Dorsolateral prefrontal cortex (tissue), 120 donors: ENCODE measurements at regions of chr5 and their contacts with region 1.

Region 1: GRCh38 chr5:75511435-75512384 is at the starts of genes CERT1 and POLK:
- DNase-seq: peak; percentile 95 to 100 (median 98)
- H3K4me3 ChIP-seq: peak within 1 kb of the TSS; percentile 67 to 98 (median 88)
- H3K27ac ChIP-seq: peak within 1 kb of the TSS; percentile 82 to 99 (median 96)
- H3K27me3 ChIP-seq: no peaks in the 10 kb centered on the region
- CTCF ChIP-seq: peak in 18 of 56 donors; percentile 6 to 47 (median 24)
- total RNA-seq, gene CERT1: 37.0 to 86.0 (median 61.1) TPM
- total RNA-seq, gene POLK: 30.3 to 55.8 (median 41.3) TPM

Region 2: DNA sequence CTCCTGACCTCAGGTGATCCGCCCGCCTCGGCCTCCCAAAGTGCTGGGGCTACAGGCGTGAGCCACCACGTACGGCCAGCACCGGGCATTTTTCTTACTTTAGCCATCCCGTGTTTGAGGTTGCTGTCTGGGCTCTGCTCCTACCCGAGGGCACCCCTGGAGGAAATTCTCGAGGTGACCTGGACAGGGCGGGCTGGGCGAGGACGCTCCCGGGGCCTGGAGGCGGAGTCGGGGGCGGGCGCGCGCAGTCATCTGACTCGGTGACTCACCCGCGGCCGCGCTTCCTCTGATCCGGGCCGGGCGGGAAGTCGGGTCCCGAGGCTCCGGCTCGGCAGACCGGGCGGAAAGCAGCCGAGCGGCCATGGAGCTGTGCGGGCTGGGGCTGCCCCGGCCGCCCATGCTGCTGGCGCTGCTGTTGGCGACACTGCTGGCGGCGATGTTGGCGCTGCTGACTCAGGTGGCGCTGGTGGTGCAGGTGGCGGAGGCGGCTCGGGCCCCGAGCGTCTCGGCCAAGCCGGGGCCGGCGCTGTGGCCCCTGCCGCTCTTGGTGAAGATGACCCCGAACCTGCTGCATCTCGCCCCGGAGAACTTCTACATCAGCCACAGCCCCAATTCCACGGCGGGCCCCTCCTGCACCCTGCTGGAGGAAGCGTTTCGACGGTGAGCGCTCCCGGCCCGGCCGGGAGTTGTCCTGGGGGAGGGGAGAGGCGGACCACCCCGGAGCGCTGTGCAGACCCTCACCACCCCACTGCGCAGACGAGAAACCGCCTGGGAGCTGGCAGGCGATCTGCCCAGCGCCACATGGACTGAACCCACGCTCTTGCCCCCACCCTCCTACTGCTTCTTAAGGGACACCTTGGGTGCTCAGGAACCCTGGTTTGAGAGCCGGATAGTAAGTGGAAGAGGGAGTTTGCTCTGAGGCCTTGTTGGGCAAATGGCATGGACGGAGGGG is 826.5 kb before region 1 on chr5 and contains the start of gene HEXB:
- intact Hi-C with region 1: loop called in 1 of 2 experiments (anchors 10 kb)
- DNase-seq: peak; percentile 72 to 93 (median 84)
- H3K4me3 ChIP-seq: peak within 1 kb of the TSS; percentile 64 to 98 (median 88)
- H3K27ac ChIP-seq: peak within 1 kb of the TSS; percentile 9 to 97 (median 86)
- H3K27me3 ChIP-seq: no peaks in the 10 kb centered on the region
- CTCF ChIP-seq: peak in 24 of 56 donors; percentile 4 to 47 (median 22)
- total RNA-seq, gene HEXB: 30.9 to 75.5 (median 53.2) TPM

Region 3: DNA sequence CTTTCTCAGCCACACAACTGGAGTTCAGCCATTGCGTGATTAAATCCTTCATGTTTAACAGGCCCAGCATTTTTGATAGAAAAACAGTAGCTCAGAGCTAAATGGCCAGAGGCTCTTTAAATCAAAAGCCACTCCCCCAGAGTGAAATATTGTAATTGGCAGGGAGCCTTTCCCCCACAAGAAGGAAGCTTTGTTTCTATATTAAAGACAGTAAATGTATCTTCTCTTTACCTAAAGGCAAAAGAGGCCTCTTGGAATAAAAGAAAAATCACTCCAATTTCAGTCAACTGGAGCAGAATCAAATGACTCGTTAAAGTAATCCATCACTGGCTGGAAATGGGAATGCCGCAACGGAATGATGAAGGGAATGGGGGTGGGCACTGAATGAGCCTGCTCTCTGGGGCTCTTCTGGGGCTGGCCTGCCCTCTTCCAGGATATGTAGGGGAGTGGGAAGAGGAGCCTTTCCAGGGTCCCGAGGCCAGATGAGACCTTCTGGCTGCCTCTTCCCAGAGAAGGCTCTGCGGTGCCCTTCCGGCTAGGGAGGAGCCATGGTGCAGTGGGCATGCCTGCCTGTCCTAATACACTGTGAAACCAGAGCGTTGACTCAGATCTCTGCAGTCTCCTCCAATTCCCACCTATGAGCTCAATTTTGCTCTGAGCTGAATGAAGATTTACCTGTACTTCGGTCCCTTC is 144.7 kb after region 1 on chr5:
- intact Hi-C with region 1: loop called (anchors 5 to 10 kb)
- DNase-seq: peak in 7 of 10 donors; percentile 40 to 66 (median 47)
- H3K4me3 ChIP-seq: peak overlapping the region; percentile 32 to 88 (median 66)
- H3K27ac ChIP-seq: peak overlapping the region; percentile 51 to 95 (median 86)
- H3K27me3 ChIP-seq: no peaks in the 10 kb centered on the region
- CTCF ChIP-seq: peak in 1 of 56 donors; percentile 11

Region 4: GRCh38 chr5:75885849-75886598 is 374.3 kb after region 1 on chr5:
- intact Hi-C with region 1: no loop called
- DNase-seq: no peak
- H3K4me3 ChIP-seq: no peak overlapping the region
- H3K27ac ChIP-seq: no peak overlapping the region
- H3K27me3 ChIP-seq: no peaks in the 10 kb centered on the region
- CTCF ChIP-seq: peak in 23 of 56 donors; percentile 13 to 47 (median 30)